Gastrocnemius medialis (tissue), 4 donors: ENCODE measurements at regions of chr10 and their contacts with region 1.

Region 1: GRCh38 chr10:112605063-112605462 is 158.0 kb downstream of the VTI1A start:
- DNase-seq: no peak
- ATAC-seq: no peak
- H3K4me3 ChIP-seq: no peak overlapping the region
- H3K27ac ChIP-seq: no peak overlapping the region
- H3K4me1 ChIP-seq: no peaks in the 10 kb centered on the region
- H3K27me3 ChIP-seq: no peaks in the 10 kb centered on the region
- CTCF ChIP-seq: no peak
- POLR2A ChIP-seq: no peak

Region 2: GRCh38 chr10:112587729-112588128 is 17.3 kb before region 1 on chr10:
- in situ Hi-C with region 1: no loop called
- intact Hi-C with region 1: loop called (anchors 1 kb)
- DNase-seq: no peak
- ATAC-seq: no peak
- H3K4me3 ChIP-seq: no peak overlapping the region
- H3K27ac ChIP-seq: no peak overlapping the region
- H3K4me1 ChIP-seq: no peaks in the 10 kb centered on the region
- H3K27me3 ChIP-seq: no peaks in the 10 kb centered on the region
- CTCF ChIP-seq: no peak
- POLR2A ChIP-seq: no peak